ENCODE measurements at regions of chr17 and their contacts with region 1.

Region 1: GRCh38 chr17:50707289-50708049 is at the start of gene ANKRD40:
- DNase-seq: peak; percentile 91
- ATAC-seq: peak; percentile 88
- H3K4me3 ChIP-seq: peak within 1 kb of the TSS; percentile 84
- H3K27ac ChIP-seq: peak within 1 kb of the TSS; percentile 94
- H3K4me1 ChIP-seq: peaks cover 7% of the 10 kb centered on the region
- H3K27me3 ChIP-seq: no peaks in the 10 kb centered on the region
- CTCF ChIP-seq: no peak
- POLR2A ChIP-seq: peak; percentile 81
- RAD21 ChIP-seq: no peak
- total RNA-seq, gene ANKRD40: 35.8 and 38.9 TPM in 2 replicates

Region 2: DNA sequence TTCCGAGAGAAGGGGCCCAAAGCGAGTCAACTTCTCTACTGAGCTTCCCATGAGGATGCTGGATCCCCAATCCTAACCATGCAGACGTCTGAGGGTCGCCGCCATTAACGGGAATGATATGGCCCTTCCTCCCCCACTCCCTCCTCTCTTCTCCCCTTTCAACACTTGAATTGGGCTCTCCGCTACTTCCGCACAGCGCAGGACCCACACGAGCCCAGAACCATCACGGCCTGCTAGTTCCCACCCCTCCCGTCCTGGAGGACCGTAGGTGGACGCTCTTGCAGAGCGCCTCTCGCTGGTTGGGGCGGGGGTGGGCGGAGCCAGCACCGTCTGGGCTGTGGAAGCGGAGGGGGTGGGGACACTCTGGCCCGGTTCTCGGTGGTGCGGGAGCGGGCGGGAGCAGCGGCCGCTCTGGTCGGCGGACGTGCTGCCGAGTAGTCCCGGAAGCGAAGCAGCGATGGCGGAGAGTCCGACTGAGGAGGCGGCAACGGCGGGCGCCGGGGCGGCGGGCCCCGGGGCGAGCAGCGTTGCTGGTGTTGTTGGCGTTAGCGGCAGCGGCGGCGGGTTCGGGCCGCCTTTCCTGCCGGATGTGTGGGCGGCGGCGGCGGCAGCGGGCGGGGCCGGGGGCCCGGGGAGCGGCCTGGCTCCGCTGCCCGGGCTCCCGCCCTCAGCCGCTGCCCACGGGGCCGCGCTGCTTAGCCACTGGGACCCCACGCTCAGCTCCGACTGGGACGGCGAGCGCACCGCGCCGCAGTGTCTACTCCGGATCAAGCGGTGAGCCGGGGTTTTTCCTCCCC is 1799.2 kb before region 1 on chr17 and contains the start of gene UBE2Z:
- CTCF ChIA-PET with region 1: interaction called, 10 read pairs
- POLR2A ChIA-PET with region 1: no interaction called
- dilution Hi-C with region 1: no loop called
- in situ Hi-C with region 1: no loop called
- intact Hi-C with region 1: no loop called
- DNase-seq: peak; percentile 95
- ATAC-seq: peak; percentile 90
- H3K4me3 ChIP-seq: peak within 1 kb of the TSS; percentile 68
- H3K27ac ChIP-seq: peak within 1 kb of the TSS; percentile 96
- H3K4me1 ChIP-seq: peaks cover 13% of the 10 kb centered on the region
- H3K27me3 ChIP-seq: no peaks in the 10 kb centered on the region
- CTCF ChIP-seq: peak; percentile 19; the same call in 1 of the 2 replicates
- POLR2A ChIP-seq: peak; percentile 96
- RAD21 ChIP-seq: no peak
- total RNA-seq, gene UBE2Z: 68.5 and 76.1 TPM in 2 replicates

Region 3: GRCh38 chr17:50507871-50508572 is 199.4 kb before region 1 on chr17 and contains the start of gene MYCBPAP:
- CTCF ChIA-PET with region 1: no interaction called
- POLR2A ChIA-PET with region 1: interaction called, 16 read pairs
- dilution Hi-C with region 1: no loop called
- in situ Hi-C with region 1: no loop called
- intact Hi-C with region 1: no loop called
- DNase-seq: peak; percentile 68
- ATAC-seq: peak; percentile 85
- H3K4me3 ChIP-seq: peak within 1 kb of the TSS; percentile 43
- H3K27ac ChIP-seq: peak within 1 kb of the TSS; percentile 6
- H3K4me1 ChIP-seq: peaks cover 4% of the 10 kb centered on the region
- H3K27me3 ChIP-seq: no peaks in the 10 kb centered on the region; the same call in 1 of the 2 replicates
- CTCF ChIP-seq: 0 out of 2 replicates have a peak, but pooled peaks have one; percentile 9
- POLR2A ChIP-seq: no peak
- RAD21 ChIP-seq: no peak
- total RNA-seq, gene MYCBPAP: under 0.01 and 0.18 TPM in 2 replicates

Region 4: GRCh38 chr17:50719144-50719923 is 11.9 kb after region 1 on chr17 and contains the start of gene LUC7L3:
- CTCF ChIA-PET with region 1: no interaction called
- POLR2A ChIA-PET with region 1: no interaction called
- dilution Hi-C with region 1: no loop called
- in situ Hi-C with region 1: no loop called
- intact Hi-C with region 1: loop called (anchors 1 kb)
- DNase-seq: peak; percentile 91
- ATAC-seq: peak; percentile 97
- H3K4me3 ChIP-seq: peak within 1 kb of the TSS; percentile 79
- H3K27ac ChIP-seq: peak within 1 kb of the TSS; percentile 91
- H3K4me1 ChIP-seq: no peaks in the 10 kb centered on the region
- H3K27me3 ChIP-seq: no peaks in the 10 kb centered on the region
- CTCF ChIP-seq: no peak
- POLR2A ChIP-seq: peak; percentile 96
- RAD21 ChIP-seq: no peak
- total RNA-seq, gene LUC7L3: 17.7 and 20.0 TPM in 2 replicates